Caco-2 (cell line): ENCODE measurements at regions of chr6 and their contacts with region 1.

Region 1: DNA sequence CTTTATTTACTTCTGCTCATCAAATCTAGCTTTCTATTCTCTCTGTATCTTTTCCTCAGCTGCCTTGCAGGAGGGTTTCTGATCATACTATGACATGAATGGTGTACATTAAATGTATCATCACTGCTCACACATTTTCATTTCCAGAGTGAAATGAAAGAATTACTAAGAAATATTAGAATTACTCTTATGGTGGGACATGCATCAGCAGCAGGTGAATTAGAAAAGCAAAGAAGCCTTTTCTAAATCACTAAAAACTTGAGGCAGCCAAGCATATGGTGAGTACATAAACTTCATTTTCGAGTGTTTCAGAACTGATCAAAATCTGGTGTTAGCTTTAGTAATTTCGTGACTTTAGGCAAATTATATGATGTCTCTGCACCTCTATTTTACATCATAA is 23.6 kb downstream of the IL17A start:
- DNase-seq: no peak
- H3K4me3 ChIP-seq: no peak overlapping the region
- H3K4me3 Mint-ChIP-seq: no peak overlapping the region
- H3K27ac Mint-ChIP-seq: no peak overlapping the region
- H3K4me1 ChIP-seq: no peaks in the 10 kb centered on the region
- H3K4me1 Mint-ChIP-seq: no peaks in the 10 kb centered on the region
- H3K27me3 ChIP-seq: no peaks in the 10 kb centered on the region
- H3K27me3 Mint-ChIP-seq: peaks cover 10% of the 10 kb centered on the region
- CTCF ChIP-seq: no peak

Region 2: DNA sequence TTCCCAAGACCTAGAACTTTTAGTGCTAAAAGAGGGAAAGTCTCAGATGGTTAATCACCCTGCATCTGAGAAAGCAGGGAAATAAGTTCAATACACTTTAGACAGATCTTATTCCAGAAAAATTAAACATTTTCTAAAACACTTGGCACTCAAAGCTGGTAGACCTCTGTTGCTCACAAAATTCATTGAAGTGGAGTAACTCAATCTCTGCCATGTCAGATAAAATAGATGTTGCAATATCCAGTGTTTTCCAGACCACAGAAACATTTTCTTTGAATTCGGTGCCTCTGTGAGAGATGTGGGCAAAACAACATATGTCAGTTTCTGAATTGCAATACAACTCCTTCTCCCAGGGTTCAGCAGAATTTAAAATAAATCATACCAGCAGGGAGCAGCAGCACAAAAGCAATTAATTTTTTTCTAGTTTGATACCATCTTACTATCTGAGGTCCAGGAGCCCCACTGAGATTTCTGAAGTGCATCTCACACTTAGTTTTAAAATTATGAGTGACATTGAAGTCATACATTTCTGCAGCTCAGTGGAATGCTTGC is 111.1 kb before region 1 on chr6:
- CTCF ChIA-PET with region 1: no interaction called
- POLR2A ChIA-PET with region 1: no interaction called
- intact Hi-C with region 1: no loop called
- DNase-seq: no peak
- H3K4me3 ChIP-seq: no peak overlapping the region
- H3K4me3 Mint-ChIP-seq: no peak overlapping the region
- H3K27ac Mint-ChIP-seq: no peak overlapping the region
- H3K4me1 ChIP-seq: no peaks in the 10 kb centered on the region
- H3K4me1 Mint-ChIP-seq: peaks cover 5% of the 10 kb centered on the region
- H3K27me3 ChIP-seq: no peaks in the 10 kb centered on the region
- H3K27me3 Mint-ChIP-seq: peaks cover 3% of the 10 kb centered on the region
- CTCF ChIP-seq: no peak

Region 3: GRCh38 chr6:52155791-52156576 is 53.8 kb before region 1 on chr6:
- CTCF ChIA-PET with region 1: no interaction called
- POLR2A ChIA-PET with region 1: no interaction called
- intact Hi-C with region 1: no loop called
- DNase-seq: no peak
- H3K4me3 ChIP-seq: no peak overlapping the region
- H3K4me3 Mint-ChIP-seq: no peak overlapping the region
- H3K27ac Mint-ChIP-seq: no peak overlapping the region
- H3K4me1 ChIP-seq: peaks cover 8% of the 10 kb centered on the region
- H3K4me1 Mint-ChIP-seq: peaks cover 11% of the 10 kb centered on the region
- H3K27me3 ChIP-seq: no peaks in the 10 kb centered on the region
- H3K27me3 Mint-ChIP-seq: no peaks in the 10 kb centered on the region
- CTCF ChIP-seq: no peak

Region 4: DNA sequence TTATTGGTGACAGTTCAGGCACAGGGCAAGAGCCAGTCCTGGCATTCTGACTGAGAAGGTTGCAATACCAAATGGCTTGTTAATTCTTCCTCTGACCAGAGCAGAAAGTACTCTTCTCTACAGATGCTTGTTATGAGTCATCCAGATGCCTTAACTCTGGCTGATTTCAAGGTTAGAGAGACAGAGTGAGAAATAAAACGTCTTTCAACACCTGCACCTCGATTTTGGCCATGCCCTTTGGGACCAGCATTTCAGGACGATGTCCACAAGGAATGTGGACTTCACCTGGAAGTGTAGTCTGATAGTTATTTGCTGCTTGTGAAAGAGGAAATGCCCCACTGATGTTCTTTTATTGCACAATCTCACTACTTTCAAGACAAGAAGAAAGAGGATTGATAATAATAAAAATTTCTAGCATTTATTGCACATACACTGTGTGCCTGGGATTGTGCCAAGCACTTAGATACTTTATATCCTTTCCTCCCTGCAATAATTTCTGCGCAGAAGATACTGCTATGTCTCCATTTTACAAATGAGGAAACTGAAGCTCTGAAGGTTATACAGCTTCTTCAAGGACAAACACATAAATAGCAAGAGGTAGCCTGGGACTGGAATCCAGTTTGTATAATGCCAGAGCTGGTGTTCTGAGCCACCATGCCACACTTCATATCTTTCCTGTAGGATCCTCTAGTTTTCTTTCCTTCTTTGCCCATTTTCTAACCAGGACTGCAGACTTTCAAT is 108.2 kb after region 1 on chr6:
- CTCF ChIA-PET with region 1: no interaction called
- POLR2A ChIA-PET with region 1: no interaction called
- intact Hi-C with region 1: loop called (anchors 5 kb)
- DNase-seq: no peak
- H3K4me3 ChIP-seq: no peak overlapping the region
- H3K4me3 Mint-ChIP-seq: no peak overlapping the region
- H3K27ac Mint-ChIP-seq: no peak overlapping the region
- H3K4me1 ChIP-seq: peaks cover 18% of the 10 kb centered on the region
- H3K4me1 Mint-ChIP-seq: peaks cover 14% of the 10 kb centered on the region
- H3K27me3 ChIP-seq: no peaks in the 10 kb centered on the region
- H3K27me3 Mint-ChIP-seq: no peaks in the 10 kb centered on the region
- CTCF ChIP-seq: no peak